Naive thymus-derived CD4-positive, alpha-beta T cell (primary cell): ENCODE measurements at regions of chr4 and their contacts with region 1.

Region 1: DNA sequence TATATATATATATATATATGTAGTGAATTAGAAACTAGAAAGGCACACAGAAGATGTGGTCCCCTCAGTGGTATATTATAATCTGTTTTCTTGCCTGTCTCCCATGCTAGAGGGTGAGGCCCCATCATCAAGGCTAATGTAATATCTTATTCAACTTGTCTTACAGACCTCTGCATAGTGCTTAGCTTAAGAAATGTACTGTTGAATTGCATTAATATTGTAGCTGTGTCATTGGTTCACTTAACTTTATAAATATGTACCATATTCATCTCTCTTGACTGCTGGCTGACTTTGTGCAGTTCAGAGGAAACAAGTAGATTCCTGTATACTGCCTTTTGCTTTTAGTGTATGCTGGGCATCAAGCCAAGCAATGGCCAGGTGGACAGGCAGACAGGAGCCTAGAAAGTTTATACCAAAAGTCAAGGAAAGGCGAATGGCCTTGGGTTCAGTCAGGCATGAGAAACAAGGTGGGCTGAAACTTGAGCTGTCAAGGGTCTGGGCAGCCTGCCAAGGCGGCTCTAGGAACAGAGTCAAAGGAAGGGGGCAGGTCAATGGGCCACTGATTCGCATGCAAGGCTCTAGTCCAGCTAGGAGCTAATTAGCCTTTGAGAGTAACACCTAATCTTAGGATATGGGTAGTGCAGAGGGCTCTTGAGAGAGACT is 78.8 kb upstream of the LEF1 start:
- DNase-seq: no peak
- ATAC-seq: no peak
- H3K4me3 ChIP-seq: no peak overlapping the region
- H3K4me3 Mint-ChIP-seq: no peak overlapping the region
- H3K27ac ChIP-seq: no peak overlapping the region
- H3K27ac Mint-ChIP-seq: no peak overlapping the region
- H3K4me1 ChIP-seq: peaks cover 0 to 13% of the 10 kb centered on the region in 2 donors
- H3K4me1 Mint-ChIP-seq: peaks cover 4 to 26% (median 17%) of the 10 kb centered on the region in 7 donors
- H3K27me3 ChIP-seq: no peaks in the 10 kb centered on the region
- H3K27me3 Mint-ChIP-seq: no peaks in the 10 kb centered on the region

Region 2: GRCh38 chr4:108227923-108228322 is 19.6 kb before region 1 on chr4:
- CTCF ChIA-PET with region 1: no interaction called
- POLR2A ChIA-PET with region 1: interaction called, 3 read pairs
- intact Hi-C with region 1: loop called in 1 of 2 experiments (anchors 2 kb)
- DNase-seq: no peak
- ATAC-seq: no peak
- H3K4me3 ChIP-seq: no peak overlapping the region
- H3K4me3 Mint-ChIP-seq: no peak overlapping the region
- H3K27ac ChIP-seq: no peak overlapping the region
- H3K27ac Mint-ChIP-seq: peak overlapping the region in 5 of 9 donors; percentile 1 to 63 (median 51)
- H3K4me1 ChIP-seq: no peaks in the 10 kb centered on the region
- H3K4me1 Mint-ChIP-seq: peaks cover 4 to 21% (median 14%) of the 10 kb centered on the region in 7 donors
- H3K27me3 ChIP-seq: no peaks in the 10 kb centered on the region
- H3K27me3 Mint-ChIP-seq: no peaks in the 10 kb centered on the region

Region 3: DNA sequence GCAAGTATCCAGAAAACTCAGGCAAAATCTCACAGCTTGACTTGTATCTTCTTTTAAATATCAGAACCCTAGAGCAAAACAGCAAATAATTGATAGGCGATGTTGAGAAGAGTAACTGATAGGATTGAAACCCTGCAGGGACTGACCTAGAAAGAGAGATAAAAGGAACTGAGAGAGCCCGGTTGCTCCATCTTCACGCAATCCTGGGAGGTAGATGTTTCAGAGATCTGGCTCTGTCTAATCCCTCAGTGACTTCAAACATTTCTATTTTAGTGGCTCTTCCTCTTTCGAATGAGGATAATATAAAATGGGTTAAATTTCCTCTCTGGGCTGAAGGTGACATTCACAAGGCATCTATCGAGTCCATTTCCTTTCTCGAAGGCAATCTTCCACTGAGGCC is 333.6 kb after region 1 on chr4:
- CTCF ChIA-PET with region 1: no interaction called
- POLR2A ChIA-PET with region 1: interaction called, 12 read pairs
- intact Hi-C with region 1: no loop called
- DNase-seq: no peak
- ATAC-seq: no peak
- H3K4me3 ChIP-seq: no peak overlapping the region
- H3K4me3 Mint-ChIP-seq: no peak overlapping the region
- H3K27ac ChIP-seq: no peak overlapping the region
- H3K27ac Mint-ChIP-seq: peak overlapping the region in 2 of 9 donors; percentile 17 to 62
- H3K4me1 ChIP-seq: no peaks in the 10 kb centered on the region
- H3K4me1 Mint-ChIP-seq: peaks cover 0 to 12% (median 6%) of the 10 kb centered on the region in 7 donors
- H3K27me3 ChIP-seq: no peaks in the 10 kb centered on the region
- H3K27me3 Mint-ChIP-seq: no peaks in the 10 kb centered on the region